ENCODE measurements at regions of chr11 and their contacts with region 1.

Region 1: GRCh38 chr11:62601394-62602140 is at the start of gene MTA2:
- DNase-seq: peak; percentile 98 to 100 (median 99)
- ATAC-seq: peak; percentile 79
- H3K4me3 ChIP-seq: peak within 1 kb of the TSS; percentile 100
- H3K4me3 Mint-ChIP-seq: peak within 1 kb of the TSS; percentile 94
- H3K27ac ChIP-seq: peak within 1 kb of the TSS; percentile 85 to 94
- H3K27ac Mint-ChIP-seq: peak within 1 kb of the TSS; percentile 93
- H3K4me1 ChIP-seq: peaks cover 46% of the 10 kb centered on the region
- H3K4me1 Mint-ChIP-seq: peaks cover 56% of the 10 kb centered on the region
- H3K27me3 ChIP-seq: no peaks in the 10 kb centered on the region
- H3K27me3 Mint-ChIP-seq: no peaks in the 10 kb centered on the region
- CTCF ChIP-seq: no peak
- total RNA-seq, gene MTA2: 167 to 172 TPM

Region 2: DNA sequence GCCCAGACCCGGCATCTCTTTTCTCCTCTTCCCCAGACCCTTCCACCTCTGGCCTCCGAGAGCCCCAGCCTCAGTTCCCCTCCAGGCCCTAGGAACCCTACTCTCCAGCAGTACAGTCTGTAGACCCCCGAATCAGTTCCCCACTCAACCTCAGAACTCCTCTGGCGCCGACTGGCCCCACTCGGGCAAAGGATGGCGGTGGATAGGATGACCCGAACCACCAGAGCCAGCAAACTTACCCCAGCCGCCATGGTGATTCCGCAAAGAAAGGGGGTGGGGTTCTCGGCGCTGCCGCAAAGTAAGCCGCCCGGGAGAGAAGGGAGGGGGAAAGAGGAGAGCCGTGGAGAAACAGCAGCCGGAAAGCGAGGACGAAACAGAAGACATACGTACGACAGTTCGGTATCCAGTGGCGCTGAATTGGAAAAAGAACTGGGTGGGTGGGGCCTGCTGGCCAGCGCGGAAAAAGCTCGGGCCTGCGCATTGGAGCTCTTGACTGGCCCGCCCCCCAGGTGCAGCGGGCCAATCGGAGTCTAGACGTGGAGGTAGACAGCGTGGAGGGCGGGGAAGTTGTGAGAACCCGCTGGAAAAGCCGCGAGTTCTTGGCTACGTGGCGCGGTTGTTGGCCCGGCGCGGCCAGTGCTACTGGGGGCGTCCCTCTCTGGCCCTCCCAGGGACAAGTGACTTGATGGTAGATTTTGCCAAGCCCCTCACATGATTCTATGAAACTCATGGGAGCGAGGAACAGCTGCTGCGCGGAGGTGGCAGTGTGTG is 27.8 kb before region 1 on chr11 and contains the start of gene EEF1G:
- CTCF ChIA-PET with region 1: interaction called, 5 read pairs
- POLR2A ChIA-PET with region 1: interaction called, 17 read pairs
- intact Hi-C with region 1: no loop called
- DNase-seq: peak; percentile 95 to 100 (median 97)
- ATAC-seq: peak; percentile 94
- H3K4me3 ChIP-seq: peak within 1 kb of the TSS; percentile 82
- H3K4me3 Mint-ChIP-seq: peak within 1 kb of the TSS; percentile 93
- H3K27ac ChIP-seq: peak within 1 kb of the TSS; percentile 76 to 83
- H3K27ac Mint-ChIP-seq: peak within 1 kb of the TSS; percentile 89
- H3K4me1 ChIP-seq: peaks cover 48% of the 10 kb centered on the region
- H3K4me1 Mint-ChIP-seq: peaks cover 55% of the 10 kb centered on the region
- H3K27me3 ChIP-seq: no peaks in the 10 kb centered on the region
- H3K27me3 Mint-ChIP-seq: no peaks in the 10 kb centered on the region
- CTCF ChIP-seq: no peak
- total RNA-seq, gene EEF1G: 2,181 to 2,269 TPM

Region 3: GRCh38 chr11:62632492-62632891 is 30.9 kb after region 1 on chr11:
- CTCF ChIA-PET with region 1: no interaction called
- POLR2A ChIA-PET with region 1: interaction called, 10 read pairs
- intact Hi-C with region 1: no loop called
- DNase-seq: no peak
- ATAC-seq: no peak
- H3K4me3 ChIP-seq: no peak overlapping the region
- H3K4me3 Mint-ChIP-seq: no peak overlapping the region
- H3K27ac ChIP-seq: no peak overlapping the region
- H3K27ac Mint-ChIP-seq: peak overlapping the region; percentile 30
- H3K4me1 ChIP-seq: peaks cover 27% of the 10 kb centered on the region
- H3K4me1 Mint-ChIP-seq: peaks cover 19% of the 10 kb centered on the region
- H3K27me3 ChIP-seq: no peaks in the 10 kb centered on the region
- H3K27me3 Mint-ChIP-seq: no peaks in the 10 kb centered on the region
- CTCF ChIP-seq: no peak

Region 4: GRCh38 chr11:62671575-62672389 is 70.2 kb after region 1 on chr11 and contains the starts of genes LBHD1 and UQCC3:
- CTCF ChIA-PET with region 1: no interaction called
- POLR2A ChIA-PET with region 1: interaction called, 21 read pairs
- intact Hi-C with region 1: no loop called
- DNase-seq: peak; percentile 50 to 89 (median 68)
- ATAC-seq: peak; percentile 74
- H3K4me3 ChIP-seq: peak within 1 kb of the TSS; percentile 98
- H3K4me3 Mint-ChIP-seq: peak within 1 kb of the TSS; percentile 91
- H3K27ac ChIP-seq: peak within 1 kb of the TSS; percentile 72 to 83
- H3K27ac Mint-ChIP-seq: peak within 1 kb of the TSS; percentile 87
- H3K4me1 ChIP-seq: peaks cover 55% of the 10 kb centered on the region
- H3K4me1 Mint-ChIP-seq: peaks cover 53% of the 10 kb centered on the region
- H3K27me3 ChIP-seq: no peaks in the 10 kb centered on the region
- H3K27me3 Mint-ChIP-seq: no peaks in the 10 kb centered on the region
- CTCF ChIP-seq: no peak
- total RNA-seq, gene LBHD1: 10.4 to 10.5 TPM
- total RNA-seq, gene UQCC3: 1.5 to 2.3 TPM

Region 5: DNA sequence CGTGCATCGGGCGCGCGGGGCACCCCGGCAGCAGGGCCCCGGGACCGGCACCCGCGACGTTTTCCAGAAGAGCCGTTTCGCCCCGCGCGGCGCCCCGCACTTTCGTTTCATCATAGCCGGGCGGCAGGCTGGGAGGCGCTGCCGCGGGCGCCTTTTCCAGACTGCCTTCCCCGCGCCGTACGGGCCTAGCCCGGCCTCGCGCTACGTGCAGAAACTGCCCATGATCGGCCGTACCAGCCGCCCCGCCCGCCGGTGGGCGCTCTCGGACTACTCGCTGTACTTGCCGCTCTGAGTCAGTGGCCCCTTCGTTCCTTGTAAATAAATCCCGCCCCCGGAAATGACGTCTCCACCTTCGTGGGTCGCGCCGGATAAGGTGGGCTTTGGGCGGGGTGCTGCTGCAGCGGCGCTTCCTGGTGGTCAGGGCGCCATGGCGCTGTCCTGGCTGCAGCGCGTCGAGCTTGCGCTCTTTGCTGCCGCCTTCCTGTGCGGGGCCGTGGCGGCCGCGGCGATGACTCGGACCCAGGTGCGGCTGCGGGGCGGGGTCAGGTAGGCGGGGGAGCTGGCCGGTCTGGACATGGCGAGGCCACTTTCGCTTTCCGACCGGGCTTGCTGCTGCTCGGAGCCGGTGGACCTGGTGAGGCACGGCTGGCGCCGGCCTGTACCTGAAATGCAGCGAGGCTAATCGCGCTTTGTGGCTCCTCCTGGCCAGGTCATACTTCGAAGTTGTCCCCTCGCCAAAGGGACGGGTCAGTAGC is 185.6 kb after region 1 on chr11 and contains the start of gene TMEM179B:
- CTCF ChIA-PET with region 1: no interaction called
- POLR2A ChIA-PET with region 1: interaction called, 12 read pairs
- intact Hi-C with region 1: no loop called
- DNase-seq: peak; percentile 90 to 99 (median 97)
- ATAC-seq: peak; percentile 61
- H3K4me3 ChIP-seq: peak within 1 kb of the TSS; percentile 77
- H3K4me3 Mint-ChIP-seq: peak within 1 kb of the TSS; percentile 98
- H3K27ac ChIP-seq: peak within 1 kb of the TSS; percentile 80 to 92
- H3K27ac Mint-ChIP-seq: peak within 1 kb of the TSS; percentile 98
- H3K4me1 ChIP-seq: peaks cover 53% of the 10 kb centered on the region
- H3K4me1 Mint-ChIP-seq: peaks cover 55% of the 10 kb centered on the region
- H3K27me3 ChIP-seq: no peaks in the 10 kb centered on the region
- H3K27me3 Mint-ChIP-seq: no peaks in the 10 kb centered on the region
- CTCF ChIP-seq: no peak
- total RNA-seq, gene TMEM179B: 34.7 to 37.4 TPM

Region 6: GRCh38 chr11:62880803-62881578 is 279.4 kb after region 1 on chr11 and contains the start of gene SLC3A2:
- CTCF ChIA-PET with region 1: interaction called, 5 read pairs
- POLR2A ChIA-PET with region 1: interaction called, 3 read pairs
- intact Hi-C with region 1: loop called in 1 of 2 experiments (anchors 2 kb)
- DNase-seq: peak; percentile 61 to 94 (median 82)
- ATAC-seq: peak; percentile 74
- H3K4me3 ChIP-seq: peak within 1 kb of the TSS; percentile 99
- H3K4me3 Mint-ChIP-seq: peak within 1 kb of the TSS; percentile 93
- H3K27ac ChIP-seq: peak within 1 kb of the TSS; percentile 95 to 98
- H3K27ac Mint-ChIP-seq: peak within 1 kb of the TSS; percentile 100
- H3K4me1 ChIP-seq: peaks cover 47% of the 10 kb centered on the region
- H3K4me1 Mint-ChIP-seq: peaks cover 52% of the 10 kb centered on the region
- H3K27me3 ChIP-seq: no peaks in the 10 kb centered on the region
- H3K27me3 Mint-ChIP-seq: no peaks in the 10 kb centered on the region
- CTCF ChIP-seq: peak; percentile 86
- total RNA-seq, gene SLC3A2: 231 to 234 TPM

Region 7: GRCh38 chr11:62974848-62975522 is 373.4 kb after region 1 on chr11:
- CTCF ChIA-PET with region 1: no interaction called
- POLR2A ChIA-PET with region 1: no interaction called
- intact Hi-C with region 1: no loop called
- DNase-seq: peak in 4 of 14 experiments; percentile 2 to 24 (median 13)
- ATAC-seq: no peak
- H3K4me3 ChIP-seq: no peak overlapping the region
- H3K4me3 Mint-ChIP-seq: no peak overlapping the region
- H3K27ac ChIP-seq: no peak overlapping the region
- H3K27ac Mint-ChIP-seq: no peak overlapping the region
- H3K4me1 ChIP-seq: no peaks in the 10 kb centered on the region
- H3K4me1 Mint-ChIP-seq: no peaks in the 10 kb centered on the region
- H3K27me3 ChIP-seq: peaks cover 5 to 8% of the 10 kb centered on the region in 2 experiments
- H3K27me3 Mint-ChIP-seq: peaks cover 43% of the 10 kb centered on the region
- CTCF ChIP-seq: peak; percentile 10

Measured in CD4-positive, alpha-beta T cell (primary cell).